ENCODE measurements at regions of chr7 and their contacts with region 1.

Region 1: DNA sequence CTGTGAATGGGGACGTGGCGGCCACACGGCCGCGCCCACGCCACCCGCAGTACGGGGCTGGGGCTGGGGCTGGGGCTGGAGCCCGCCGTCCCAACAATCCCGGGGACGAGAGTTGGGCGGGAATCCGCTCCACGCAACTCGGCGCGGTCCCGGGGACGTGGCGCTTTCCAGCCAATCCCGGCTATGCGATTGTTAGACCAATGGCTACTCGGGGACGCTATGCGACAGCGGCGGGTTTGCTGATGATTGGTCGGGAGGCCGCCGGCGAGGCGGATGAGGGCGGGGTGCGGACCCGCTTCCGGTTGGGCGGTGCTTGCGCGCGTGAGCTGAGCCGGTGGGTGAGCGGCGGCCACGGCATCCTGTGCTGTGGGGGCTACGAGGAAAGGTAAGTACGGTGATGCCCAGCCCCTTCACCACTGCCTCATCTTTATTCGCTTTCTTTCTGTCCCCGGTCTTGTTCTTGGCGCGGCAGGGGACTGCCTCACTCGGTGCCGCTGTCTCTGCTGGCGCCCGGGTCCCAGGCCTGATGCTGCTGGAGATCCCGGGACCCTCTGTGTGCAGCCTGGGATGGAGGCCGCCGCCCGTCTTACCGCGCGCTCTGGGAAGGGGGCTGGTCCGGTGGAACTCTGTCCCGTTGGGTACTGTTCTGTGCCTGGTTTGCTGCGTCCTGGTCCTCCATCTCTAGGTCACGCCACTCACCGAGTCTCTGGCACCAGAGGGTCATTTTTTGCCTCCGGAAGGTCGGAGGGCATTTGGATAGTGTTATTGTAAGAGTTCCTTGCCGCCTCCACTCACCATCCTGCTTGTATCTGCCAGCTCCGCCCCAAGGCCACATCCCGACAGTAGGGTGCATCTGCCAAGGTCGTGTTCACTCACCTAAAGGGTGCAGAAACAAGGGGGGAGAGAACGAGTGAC is at the start of gene CALU:
- DNase-seq: peak; percentile 97
- H3K4me3 Mint-ChIP-seq: peak within 1 kb of the TSS; percentile 99
- H3K27ac Mint-ChIP-seq: peak within 1 kb of the TSS; percentile 96
- H3K4me1 Mint-ChIP-seq: peaks cover 43% of the 10 kb centered on the region
- H3K27me3 Mint-ChIP-seq: no peaks in the 10 kb centered on the region
- total RNA-seq, gene CALU: 33.0 to 35.4 TPM

Region 2: GRCh38 chr7:128530855-128531104 is 208.5 kb before region 1 on chr7:
- CTCF ChIA-PET with region 1: no interaction called
- intact Hi-C with region 1: loop called (anchors 1 kb)
- DNase-seq: no peak
- H3K4me3 Mint-ChIP-seq: no peak overlapping the region
- H3K27ac Mint-ChIP-seq: no peak overlapping the region
- H3K4me1 Mint-ChIP-seq: peaks cover 32% of the 10 kb centered on the region
- H3K27me3 Mint-ChIP-seq: no peaks in the 10 kb centered on the region

Region 3: DNA sequence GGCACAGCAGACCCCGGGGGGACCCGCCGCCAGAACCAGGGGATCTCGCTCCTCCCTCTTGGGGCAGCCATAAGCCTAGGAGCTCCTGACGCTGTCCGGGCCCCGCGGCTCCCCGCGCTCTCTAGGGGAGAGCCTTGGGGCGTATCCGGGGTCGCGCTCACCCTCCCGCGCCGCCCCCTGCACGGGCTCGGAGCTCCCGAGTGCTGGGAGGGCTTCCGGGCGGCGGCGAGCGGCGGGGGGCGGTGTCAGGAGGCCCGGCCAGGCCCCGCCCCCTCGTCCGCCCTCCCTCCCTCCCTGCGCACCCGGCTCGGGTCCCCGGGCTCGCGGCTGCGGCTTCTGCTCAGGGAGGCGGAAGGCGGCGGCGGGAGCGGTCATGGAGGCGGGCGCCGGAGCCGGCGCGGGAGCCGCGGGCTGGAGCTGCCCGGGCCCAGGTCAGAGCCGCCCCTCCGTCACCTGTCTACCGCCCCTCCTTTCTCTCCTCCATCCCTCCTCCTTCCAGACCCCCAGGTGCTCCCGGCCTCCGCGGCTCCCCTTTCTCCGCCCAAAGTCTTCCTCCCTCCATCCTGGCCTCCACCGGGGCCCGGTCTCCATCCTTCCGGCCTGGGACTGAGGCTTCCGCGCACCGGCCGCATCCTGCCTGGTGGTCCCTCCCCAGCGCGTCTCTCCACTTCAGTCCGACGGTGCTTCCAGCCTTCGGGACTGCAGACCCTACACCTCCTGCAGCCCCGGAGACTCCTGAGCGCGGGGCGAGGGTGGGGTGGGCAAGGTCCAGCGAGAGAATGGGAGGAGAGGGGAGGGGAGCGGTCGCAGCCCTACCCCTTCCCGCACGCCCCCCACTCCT is 52.0 kb after region 1 on chr7:
- CTCF ChIA-PET with region 1: no interaction called
- intact Hi-C with region 1: loop called (anchors 1 kb)
- DNase-seq: peak; percentile 79
- H3K4me3 Mint-ChIP-seq: peak overlapping the region; percentile 82
- H3K27ac Mint-ChIP-seq: no peak overlapping the region
- H3K4me1 Mint-ChIP-seq: peaks cover 3% of the 10 kb centered on the region
- H3K27me3 Mint-ChIP-seq: peaks cover 3% of the 10 kb centered on the region

Region 4: GRCh38 chr7:129054438-129055293 is 315.4 kb after region 1 on chr7 and contains the start of gene TNPO3:
- CTCF ChIA-PET with region 1: no interaction called
- intact Hi-C with region 1: loop called (anchors 1 kb)
- DNase-seq: peak; percentile 95
- H3K4me3 Mint-ChIP-seq: peak within 1 kb of the TSS; percentile 95
- H3K27ac Mint-ChIP-seq: peak within 1 kb of the TSS; percentile 99
- H3K4me1 Mint-ChIP-seq: peaks cover 35% of the 10 kb centered on the region
- H3K27me3 Mint-ChIP-seq: peaks cover 3% of the 10 kb centered on the region
- total RNA-seq, gene TNPO3: 65.7 to 66.4 TPM